ENCODE measurements at regions of chr9 and their contacts with region 1.

Region 1: GRCh38 chr9:85332487-85332886 is 409.3 kb downstream of the AGTPBP1 start:
- DNase-seq: peak; percentile 29 to 49
- H3K4me3 ChIP-seq: no peak overlapping the region
- H3K27ac ChIP-seq: no peak overlapping the region
- H3K4me1 ChIP-seq: no peaks in the 10 kb centered on the region
- H3K27me3 ChIP-seq: no peaks in the 10 kb centered on the region
- CTCF ChIP-seq: peak; percentile 72 to 99 (median 91)
- EP300 ChIP-seq: no peak
- POLR2A ChIP-seq: no peak
- RAD21 ChIP-seq: peak; percentile 71 to 77

Region 2: GRCh38 chr9:85258823-85259370 is 73.6 kb before region 1 on chr9:
- CTCF ChIA-PET with region 1: no interaction called
- POLR2A ChIA-PET with region 1: no interaction called
- DNase-seq: peak; percentile 47 to 67
- H3K4me3 ChIP-seq: no peak overlapping the region
- H3K27ac ChIP-seq: no peak overlapping the region
- H3K4me1 ChIP-seq: no peaks in the 10 kb centered on the region
- H3K27me3 ChIP-seq: no peaks in the 10 kb centered on the region
- CTCF ChIP-seq: peak; percentile 87 to 98 (median 91)
- EP300 ChIP-seq: no peak
- POLR2A ChIP-seq: no peak
- RAD21 ChIP-seq: peak; percentile 98 to 99

Region 3: DNA sequence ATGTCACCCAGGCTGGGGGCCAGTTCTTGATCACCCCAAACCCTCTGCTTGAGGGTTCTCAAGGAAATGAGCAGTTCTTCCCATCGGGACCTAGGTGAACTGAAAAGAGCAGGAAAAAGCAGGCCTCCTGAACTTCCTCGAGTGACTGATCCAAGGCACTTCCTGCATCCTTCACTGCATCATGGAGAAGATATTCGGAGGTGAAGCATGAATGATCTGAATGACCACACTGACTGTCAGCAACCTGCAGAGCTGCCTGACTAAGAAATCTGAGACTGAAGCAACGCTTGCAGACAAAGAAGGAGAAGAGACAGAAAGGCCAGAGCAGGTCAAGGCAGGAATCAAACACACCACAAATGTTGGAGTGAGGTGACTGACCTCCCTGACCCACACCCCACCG is 10.9 kb before region 1 on chr9:
- CTCF ChIA-PET with region 1: interaction called, 11 read pairs
- POLR2A ChIA-PET with region 1: no interaction called
- DNase-seq: no peak
- H3K4me3 ChIP-seq: no peak overlapping the region
- H3K27ac ChIP-seq: no peak overlapping the region
- H3K4me1 ChIP-seq: no peaks in the 10 kb centered on the region
- H3K27me3 ChIP-seq: no peaks in the 10 kb centered on the region
- CTCF ChIP-seq: no peak
- EP300 ChIP-seq: no peak
- POLR2A ChIP-seq: no peak
- RAD21 ChIP-seq: no peak

Region 4: DNA sequence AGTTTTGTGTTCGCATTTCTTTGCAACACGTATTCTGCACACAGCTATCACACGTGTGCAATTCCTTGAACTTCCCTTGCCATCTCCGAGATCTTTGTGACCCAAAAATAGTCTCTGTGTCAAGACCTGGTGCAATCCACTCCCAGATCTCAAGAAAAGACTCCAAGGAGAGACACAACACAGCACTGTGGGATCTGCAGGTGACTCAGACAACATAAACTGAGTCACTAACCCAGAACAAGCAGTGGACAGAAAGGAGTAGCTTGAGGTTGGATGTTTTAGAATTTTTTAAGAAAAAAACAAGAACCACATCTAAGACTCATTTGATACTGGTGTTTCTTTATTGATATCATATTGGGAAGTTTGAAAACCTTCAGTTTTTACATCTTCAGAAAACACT is 12.4 kb after region 1 on chr9:
- CTCF ChIA-PET with region 1: interaction called, 24 read pairs
- POLR2A ChIA-PET with region 1: no interaction called
- DNase-seq: no peak
- H3K4me3 ChIP-seq: no peak overlapping the region
- H3K27ac ChIP-seq: no peak overlapping the region
- H3K4me1 ChIP-seq: no peaks in the 10 kb centered on the region
- H3K27me3 ChIP-seq: no peaks in the 10 kb centered on the region
- CTCF ChIP-seq: no peak
- EP300 ChIP-seq: no peak
- POLR2A ChIP-seq: no peak
- RAD21 ChIP-seq: no peak

Region 5: DNA sequence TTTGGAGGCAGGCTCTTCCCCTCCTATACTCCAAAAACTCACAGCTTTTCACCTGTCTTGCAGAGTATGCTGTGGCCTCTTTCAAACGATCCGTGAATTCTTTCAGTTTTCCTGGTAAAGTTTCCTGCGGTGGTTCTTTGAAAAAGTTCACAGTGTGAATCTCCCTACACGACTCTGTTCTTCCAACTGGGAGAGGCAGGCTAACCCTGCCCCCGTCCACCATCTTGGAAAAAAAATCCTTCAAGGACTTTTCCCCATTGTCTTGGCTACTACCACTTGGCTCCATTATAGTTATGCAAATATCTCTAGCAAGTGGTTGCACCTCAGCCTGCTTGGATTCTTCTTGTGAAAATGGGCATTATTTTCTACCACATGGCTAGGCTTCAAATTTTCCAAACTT is 26.7 kb after region 1 on chr9:
- CTCF ChIA-PET with region 1: interaction called, 11 read pairs
- POLR2A ChIA-PET with region 1: no interaction called
- DNase-seq: no peak
- H3K4me3 ChIP-seq: no peak overlapping the region
- H3K27ac ChIP-seq: no peak overlapping the region
- H3K4me1 ChIP-seq: no peaks in the 10 kb centered on the region
- H3K27me3 ChIP-seq: no peaks in the 10 kb centered on the region
- CTCF ChIP-seq: no peak
- EP300 ChIP-seq: no peak
- POLR2A ChIP-seq: no peak
- RAD21 ChIP-seq: no peak

Region 6: GRCh38 chr9:85425153-85425611 is 92.7 kb after region 1 on chr9:
- CTCF ChIA-PET with region 1: interaction called, 52 read pairs
- POLR2A ChIA-PET with region 1: no interaction called
- DNase-seq: peak; percentile 74 to 98
- H3K4me3 ChIP-seq: no peak overlapping the region
- H3K27ac ChIP-seq: no peak overlapping the region
- H3K4me1 ChIP-seq: peaks cover 0 to 4% (median under 1%) of the 10 kb centered on the region in 4 experiments; a peak in 2 of 7 replicates
- H3K27me3 ChIP-seq: no peaks in the 10 kb centered on the region
- CTCF ChIP-seq: peak; percentile 65 to 93 (median 78)
- EP300 ChIP-seq: no peak
- POLR2A ChIP-seq: no peak
- RAD21 ChIP-seq: peak; percentile 94 to 96

Measured in H1 (cell line).